ENCODE measurements at regions of chr4 and their contacts with region 1.

Region 1: DNA sequence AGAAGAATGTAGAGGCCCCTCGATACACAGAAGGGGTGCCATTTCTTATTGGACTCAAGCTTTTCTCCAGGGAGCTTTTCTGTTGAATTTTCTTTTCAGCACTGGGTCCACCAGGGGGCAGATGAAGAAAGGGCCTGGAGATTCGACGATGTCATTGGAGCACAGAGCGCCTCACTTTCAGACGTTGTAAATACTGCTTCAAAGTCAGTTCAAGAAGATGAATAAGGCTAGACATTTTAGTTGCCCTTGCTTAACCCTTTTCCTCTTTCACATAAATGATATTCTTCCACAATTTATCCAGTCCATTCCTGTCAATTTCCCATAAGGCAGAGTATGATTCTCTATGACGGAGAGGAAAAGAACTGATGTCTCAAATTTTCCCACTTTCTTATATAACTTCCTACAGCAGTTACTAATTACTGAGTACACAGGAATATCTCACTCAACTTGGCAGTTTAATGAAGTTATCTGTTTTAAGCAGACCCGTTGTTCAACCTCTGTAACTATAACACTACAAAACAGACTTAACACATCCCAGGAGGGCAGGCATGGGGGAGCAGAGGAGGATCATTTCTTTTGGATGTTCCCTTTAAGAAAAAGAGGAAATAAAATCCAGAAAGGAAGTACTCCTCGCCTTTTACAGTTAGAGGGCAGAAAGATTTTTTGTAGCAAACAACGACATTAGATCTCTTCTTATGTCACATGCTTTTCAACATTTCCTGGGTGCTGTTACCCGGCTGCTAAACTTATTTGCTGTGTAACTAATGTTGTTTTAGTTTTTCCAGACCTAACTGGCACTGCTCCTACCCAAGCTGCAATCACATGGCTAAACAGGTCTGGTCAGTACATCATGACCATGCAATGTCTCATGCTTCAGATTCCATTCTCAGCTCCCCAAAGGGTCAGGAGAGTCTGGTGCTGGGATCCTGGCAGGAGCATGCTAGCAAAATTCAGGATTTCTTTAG is 12.2 kb upstream of the CENPU start:
- DNase-seq: peak; percentile 82
- ATAC-seq: peak; percentile 87
- H3K4me3 ChIP-seq: no peak overlapping the region
- H3K27ac ChIP-seq: no peak overlapping the region
- H3K4me1 ChIP-seq: peaks cover 4% of the 10 kb centered on the region; the same call in 1 of the 2 replicates
- H3K27me3 ChIP-seq: no peaks in the 10 kb centered on the region; the same call in 1 of the 2 replicates
- CTCF ChIP-seq: peak; percentile 79
- POLR2A ChIP-seq: no peak
- RAD21 ChIP-seq: peak; percentile 79

Region 2: GRCh38 chr4:184733654-184734524 is 12.2 kb before region 1 on chr4 and contains the start of gene CENPU:
- CTCF ChIA-PET with region 1: interaction called, 12 read pairs
- POLR2A ChIA-PET with region 1: interaction called, 5 read pairs
- dilution Hi-C with region 1: no loop called
- in situ Hi-C with region 1: no loop called
- intact Hi-C with region 1: no loop called
- DNase-seq: peak; percentile 98
- ATAC-seq: peak; percentile 98
- H3K4me3 ChIP-seq: peak within 1 kb of the TSS; percentile 74
- H3K27ac ChIP-seq: peak within 1 kb of the TSS; percentile 11; the same call in 1 of the 2 replicates
- H3K4me1 ChIP-seq: peaks cover 4% of the 10 kb centered on the region
- H3K27me3 ChIP-seq: no peaks in the 10 kb centered on the region
- CTCF ChIP-seq: no peak
- POLR2A ChIP-seq: no peak; the same call in 1 of the 2 replicates
- RAD21 ChIP-seq: no peak
- total RNA-seq, gene CENPU: 13.6 and 26.7 TPM in 2 replicates

Region 3: DNA sequence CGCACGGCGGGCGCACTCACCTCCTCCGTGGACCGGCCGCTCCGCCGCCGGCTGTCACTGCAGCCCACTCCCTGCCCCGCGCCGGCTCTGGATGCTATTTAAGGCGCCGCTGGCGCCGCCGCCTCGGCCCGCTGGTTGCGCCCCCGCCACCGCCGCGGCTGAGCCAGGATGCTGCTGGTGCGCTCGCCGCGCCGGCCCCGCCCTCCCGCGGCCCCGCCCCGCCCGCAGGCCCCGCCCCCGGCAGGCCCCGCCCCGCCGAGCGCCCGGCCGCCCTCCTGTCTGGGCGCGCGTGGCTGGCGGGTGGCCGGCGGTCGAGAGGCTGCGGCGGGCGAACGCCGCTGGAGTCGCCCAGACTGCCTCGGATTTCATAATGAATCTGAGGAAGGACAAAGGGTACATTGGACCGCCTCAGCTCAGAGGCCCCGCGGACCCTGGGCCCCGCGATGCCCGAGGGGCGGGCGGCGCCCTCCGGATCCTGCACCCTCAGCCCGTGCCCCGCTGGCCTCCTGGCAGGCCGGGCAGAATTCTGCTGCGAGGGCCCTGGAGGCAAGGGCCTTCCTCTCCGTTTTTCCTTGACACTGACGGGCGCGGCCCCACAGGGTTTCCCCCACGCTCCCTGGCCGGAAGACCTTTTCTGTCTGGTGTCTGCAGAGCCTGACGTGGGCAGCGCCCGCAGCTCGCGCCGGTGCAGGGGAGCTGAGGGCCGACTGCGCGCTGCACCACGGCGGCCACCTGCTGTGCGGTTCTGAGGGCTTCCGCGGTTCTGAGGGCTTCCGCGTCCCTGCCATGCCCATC is 80.0 kb after region 1 on chr4 and contains the start of gene ACSL1:
- CTCF ChIA-PET with region 1: no interaction called
- POLR2A ChIA-PET with region 1: no interaction called
- dilution Hi-C with region 1: no loop called
- in situ Hi-C with region 1: no loop called
- intact Hi-C with region 1: loop called (anchors 5 kb)
- DNase-seq: peak; percentile 53
- ATAC-seq: peak; percentile 97
- H3K4me3 ChIP-seq: peak within 1 kb of the TSS; percentile 84
- H3K27ac ChIP-seq: no peak within 1 kb of the TSS; the same call in 1 of the 2 replicates
- H3K4me1 ChIP-seq: peaks cover 2% of the 10 kb centered on the region; the same call in 1 of the 2 replicates
- H3K27me3 ChIP-seq: peaks cover 5% of the 10 kb centered on the region; the same call in 1 of the 2 replicates
- CTCF ChIP-seq: 0 out of 2 replicates have a peak, but pooled peaks have one; percentile 9
- POLR2A ChIP-seq: peak; percentile 90
- RAD21 ChIP-seq: no peak
- total RNA-seq, gene ACSL1: 26.0 and 27.5 TPM in 2 replicates

Region 4: DNA sequence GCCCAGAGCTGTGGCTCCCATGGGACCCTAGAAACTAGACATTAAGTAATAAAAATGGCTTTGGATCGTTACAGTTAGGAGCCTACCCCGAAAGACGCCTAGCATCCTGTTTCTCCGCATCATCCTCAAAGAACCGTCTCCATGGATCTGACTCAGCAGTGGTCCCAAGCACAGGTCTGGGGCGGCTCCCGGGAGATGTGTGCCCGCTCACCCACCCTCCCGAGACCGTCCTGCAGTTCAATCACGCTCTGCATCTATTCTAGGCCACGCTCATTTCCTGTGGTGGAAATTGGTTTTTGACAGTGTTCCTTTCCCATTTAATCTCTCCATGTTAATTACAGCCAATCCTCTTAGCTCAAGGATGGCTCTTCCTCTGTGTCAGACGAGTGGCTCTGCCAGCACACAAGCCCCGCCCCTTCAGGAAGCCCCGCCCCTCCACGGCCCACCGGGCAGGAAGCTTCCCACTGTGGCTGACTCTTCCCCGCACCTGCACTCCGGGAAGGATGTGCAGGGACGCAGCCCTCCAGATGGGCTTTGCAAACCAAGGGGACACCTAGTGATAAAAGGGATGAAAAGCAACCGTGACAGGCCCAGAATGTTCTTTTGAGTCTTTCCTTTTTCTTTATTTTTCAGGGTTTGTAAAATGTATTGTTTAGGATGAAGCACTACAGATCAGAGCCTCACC is 237.7 kb after region 1 on chr4:
- CTCF ChIA-PET with region 1: interaction called, 3 read pairs
- POLR2A ChIA-PET with region 1: no interaction called
- dilution Hi-C with region 1: no loop called
- in situ Hi-C with region 1: no loop called
- intact Hi-C with region 1: loop called (anchors 1 kb)
- DNase-seq: peak; percentile 37
- ATAC-seq: peak; percentile 53
- H3K4me3 ChIP-seq: no peak overlapping the region
- H3K27ac ChIP-seq: no peak overlapping the region
- H3K4me1 ChIP-seq: no peaks in the 10 kb centered on the region
- H3K27me3 ChIP-seq: peaks cover 3% of the 10 kb centered on the region
- CTCF ChIP-seq: peak; percentile 42
- POLR2A ChIP-seq: no peak
- RAD21 ChIP-seq: peak; percentile 57

Region 5: DNA sequence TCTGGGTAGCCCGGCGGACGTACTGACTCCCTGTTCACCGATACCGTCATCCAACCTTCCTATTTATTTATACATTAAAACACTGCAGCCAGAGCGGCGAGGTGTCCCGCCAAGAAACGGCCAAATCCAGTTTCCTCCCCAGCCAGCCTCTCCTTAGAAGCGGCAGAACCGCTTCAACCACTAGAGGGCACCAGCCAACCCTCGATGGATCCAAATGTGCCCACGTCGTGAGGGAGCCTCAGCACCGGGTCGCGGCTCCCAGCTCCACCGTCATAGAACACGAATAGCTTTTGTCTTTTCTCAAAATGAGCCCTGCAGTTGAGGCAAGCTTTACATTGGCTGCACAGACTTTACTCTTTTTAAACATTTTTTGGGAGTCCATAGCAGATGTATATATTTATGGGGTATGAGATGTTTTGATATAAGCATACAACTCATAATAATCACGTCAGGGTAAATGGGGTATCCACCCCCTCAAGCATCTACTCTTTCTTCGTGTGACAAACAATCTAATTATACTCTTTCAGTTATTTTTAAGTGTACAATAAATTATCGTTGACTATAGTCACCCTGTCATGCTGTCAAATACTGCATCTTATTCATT is 259.2 kb after region 1 on chr4:
- CTCF ChIA-PET with region 1: interaction called, 3 read pairs
- POLR2A ChIA-PET with region 1: no interaction called
- dilution Hi-C with region 1: no loop called
- in situ Hi-C with region 1: loop called (anchors 10 kb)
- intact Hi-C with region 1: loop called (anchors 1 kb)
- DNase-seq: peak; percentile 65
- ATAC-seq: peak; percentile 97
- H3K4me3 ChIP-seq: no peak overlapping the region
- H3K27ac ChIP-seq: no peak overlapping the region
- H3K4me1 ChIP-seq: no peaks in the 10 kb centered on the region
- H3K27me3 ChIP-seq: peaks cover 32% of the 10 kb centered on the region
- CTCF ChIP-seq: peak; percentile 82
- POLR2A ChIP-seq: no peak
- RAD21 ChIP-seq: peak; percentile 78

Region 6: DNA sequence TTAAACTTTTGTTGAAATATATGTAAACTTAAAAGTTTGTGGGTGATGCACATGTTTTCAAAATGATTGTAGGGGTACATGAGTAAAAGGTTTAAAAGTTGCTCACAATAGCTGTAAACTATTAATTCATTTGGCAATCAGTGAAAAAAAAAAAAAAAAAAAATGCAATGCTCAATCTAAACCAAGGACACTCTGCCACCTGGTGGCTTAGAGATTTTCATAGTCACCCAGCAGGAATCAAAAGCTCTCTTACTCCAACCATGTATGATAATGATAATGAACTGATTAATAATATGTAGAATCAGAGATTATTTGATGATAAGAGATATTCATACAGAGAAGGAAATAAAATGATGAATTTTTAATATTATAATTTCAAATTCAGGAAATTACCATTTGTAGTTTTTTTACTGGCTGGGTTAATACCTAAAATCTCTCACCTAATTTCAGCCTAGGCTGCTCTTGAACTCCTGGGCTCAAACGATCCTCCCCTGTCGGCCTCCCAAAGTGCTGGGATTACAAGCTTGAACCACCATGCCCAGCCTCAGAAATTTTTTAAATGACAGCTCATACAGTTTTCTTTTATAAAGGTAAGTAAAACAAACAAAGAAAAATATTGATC is 350.0 kb after region 1 on chr4:
- CTCF ChIA-PET with region 1: interaction called, 9 read pairs
- POLR2A ChIA-PET with region 1: no interaction called
- dilution Hi-C with region 1: no loop called
- in situ Hi-C with region 1: no loop called
- intact Hi-C with region 1: loop called (anchors 2 kb)
- DNase-seq: peak; percentile 31
- ATAC-seq: 0 out of 2 replicates have a peak, but pooled peaks have one; percentile 37
- H3K4me3 ChIP-seq: no peak overlapping the region
- H3K27ac ChIP-seq: no peak overlapping the region
- H3K4me1 ChIP-seq: no peaks in the 10 kb centered on the region
- H3K27me3 ChIP-seq: peaks cover 16% of the 10 kb centered on the region
- CTCF ChIP-seq: peak; percentile 64
- POLR2A ChIP-seq: no peak
- RAD21 ChIP-seq: peak; percentile 58

Region 7: GRCh38 chr4:185134307-185134869 is 388.3 kb after region 1 on chr4:
- CTCF ChIA-PET with region 1: interaction called, 5 read pairs
- POLR2A ChIA-PET with region 1: no interaction called
- dilution Hi-C with region 1: no loop called
- in situ Hi-C with region 1: no loop called
- intact Hi-C with region 1: loop called (anchors 2 kb)
- DNase-seq: peak; percentile 61
- ATAC-seq: peak; percentile 87
- H3K4me3 ChIP-seq: no peak overlapping the region
- H3K27ac ChIP-seq: no peak overlapping the region
- H3K4me1 ChIP-seq: no peaks in the 10 kb centered on the region
- H3K27me3 ChIP-seq: peaks cover 2% of the 10 kb centered on the region; the same call in 1 of the 2 replicates
- CTCF ChIP-seq: peak; percentile 85
- POLR2A ChIP-seq: no peak
- RAD21 ChIP-seq: peak; percentile 84